ENCODE measurements at regions of chr10 and their contacts with region 1.

Region 1: GRCh38 chr10:102420810-102421644 is at the start of gene FBXL15:
- H3K4me3 ChIP-seq: peak within 1 kb of the TSS; percentile 80
- H3K27ac ChIP-seq: peak within 1 kb of the TSS; percentile 65
- H3K4me1 ChIP-seq: peaks cover 9% of the 10 kb centered on the region
- CTCF ChIP-seq: no peak

Region 2: GRCh38 chr10:102394079-102394800 is 26.8 kb before region 1 on chr10:
- CTCF ChIA-PET with region 1: interaction called, 57 read pairs
- POLR2A ChIA-PET with region 1: interaction called, 5 read pairs
- H3K4me3 ChIP-seq: peak overlapping the region; percentile 58
- H3K27ac ChIP-seq: no peak overlapping the region; the same call in 1 of the 2 replicates
- H3K4me1 ChIP-seq: peaks cover 5% of the 10 kb centered on the region; the same call in 1 of the 2 replicates
- CTCF ChIP-seq: peak; percentile 94

Region 3: GRCh38 chr10:102399217-102400089 is 21.6 kb before region 1 on chr10:
- CTCF ChIA-PET with region 1: interaction called, 57 read pairs
- POLR2A ChIA-PET with region 1: interaction called, 8 read pairs
- H3K4me3 ChIP-seq: peak overlapping the region; percentile 57
- H3K27ac ChIP-seq: peak overlapping the region; percentile 74; the same call in 1 of the 2 replicates
- H3K4me1 ChIP-seq: peaks cover 5% of the 10 kb centered on the region; the same call in 1 of the 2 replicates
- CTCF ChIP-seq: peak; percentile 100

Region 4: DNA sequence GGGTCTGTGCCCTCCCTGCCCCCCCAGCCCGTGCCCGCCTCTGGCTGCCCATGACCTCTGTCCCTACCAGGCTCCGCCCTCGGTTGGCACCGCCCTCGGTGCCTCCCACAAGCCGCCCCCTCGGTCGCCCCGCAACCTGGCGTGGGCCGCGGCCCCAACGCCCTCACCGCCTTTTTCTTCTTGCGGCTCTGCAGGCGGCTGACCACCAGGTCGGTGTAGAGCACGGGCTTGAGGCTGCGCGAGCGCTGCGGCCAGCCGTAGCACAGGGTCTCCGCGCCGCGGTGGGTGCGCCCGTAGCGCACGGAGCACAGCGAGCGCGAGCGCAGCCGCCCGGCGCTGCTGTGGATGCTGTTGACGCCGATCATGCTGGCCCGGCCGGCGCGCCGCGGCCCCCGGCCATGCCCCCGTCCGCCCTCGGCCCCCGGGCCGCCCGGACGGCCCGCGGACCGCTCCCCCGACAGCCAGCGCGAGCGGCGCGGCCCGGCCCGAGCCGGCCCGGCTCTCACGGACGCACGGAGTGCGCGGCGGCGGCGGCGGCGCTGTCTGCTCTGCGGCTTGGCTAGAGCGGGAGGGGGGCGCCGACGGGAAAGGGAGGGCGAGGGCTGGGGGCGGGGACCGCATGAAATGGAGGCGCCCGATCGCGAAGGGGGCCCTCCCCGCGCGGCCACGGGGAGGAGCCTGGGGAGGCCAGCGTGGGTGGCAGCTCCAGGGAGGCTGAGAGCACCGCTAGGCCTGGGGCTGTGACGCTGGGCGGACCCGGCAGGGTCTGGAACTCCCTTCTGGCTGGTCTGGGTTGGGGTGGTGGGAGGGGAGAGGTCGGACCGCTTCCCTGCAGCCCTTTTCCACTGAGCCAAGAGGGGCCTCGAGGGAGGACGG is 12.1 kb before region 1 on chr10:
- CTCF ChIA-PET with region 1: interaction called, 10 read pairs
- POLR2A ChIA-PET with region 1: interaction called, 8 read pairs
- H3K4me3 ChIP-seq: peak overlapping the region; percentile 28
- H3K27ac ChIP-seq: no peak overlapping the region
- H3K4me1 ChIP-seq: no peaks in the 10 kb centered on the region; the same call in 1 of the 2 replicates
- CTCF ChIP-seq: no peak; the same call in none of the 2 replicates

Region 5: DNA sequence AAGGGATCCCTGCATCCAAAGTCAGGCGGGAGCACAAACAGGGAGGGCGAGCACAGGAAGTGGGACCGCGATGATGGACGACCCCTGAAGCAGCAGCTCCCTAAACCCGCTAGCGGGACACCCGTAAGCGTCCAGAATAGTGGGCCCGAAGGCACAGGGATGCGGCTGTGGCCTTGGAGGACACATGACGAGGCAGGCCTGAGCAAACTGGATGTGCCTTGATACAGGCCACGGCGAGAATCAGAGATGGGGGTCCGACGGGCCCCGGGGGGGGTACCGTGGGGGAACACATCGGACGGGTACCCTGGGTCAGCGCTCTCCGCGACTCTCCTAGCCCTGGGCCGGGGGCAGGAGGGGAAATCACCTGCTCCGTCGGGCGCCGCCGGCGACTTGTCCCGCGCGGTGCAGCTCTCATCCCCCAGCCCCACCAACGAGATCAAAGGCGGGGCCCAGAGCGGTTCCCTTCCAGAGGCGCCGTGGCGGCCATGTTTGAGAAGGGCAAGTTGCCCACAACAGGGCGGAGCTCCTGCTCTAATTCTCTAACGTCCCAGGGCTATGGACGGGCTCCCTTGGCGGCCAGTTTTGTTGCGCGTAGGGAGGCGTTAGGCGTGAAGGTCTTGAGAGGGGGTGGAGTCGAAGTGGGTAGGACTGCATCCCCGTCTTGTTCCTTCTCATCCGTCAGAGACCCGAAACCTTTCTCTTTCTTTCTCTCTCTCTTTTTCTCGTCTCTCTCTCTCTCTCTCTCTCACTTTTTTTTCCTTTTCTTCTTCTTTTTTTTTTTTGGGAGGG is 11.3 kb after region 1 on chr10 and contains the start of gene CUEDC2:
- CTCF ChIA-PET with region 1: interaction called, 14 read pairs
- POLR2A ChIA-PET with region 1: interaction called, 42 read pairs
- H3K4me3 ChIP-seq: peak within 1 kb of the TSS; percentile 62
- H3K27ac ChIP-seq: peak within 1 kb of the TSS; percentile 89
- H3K4me1 ChIP-seq: peaks cover 3% of the 10 kb centered on the region; the same call in 1 of the 2 replicates
- CTCF ChIP-seq: peak; percentile 71

Region 6: DNA sequence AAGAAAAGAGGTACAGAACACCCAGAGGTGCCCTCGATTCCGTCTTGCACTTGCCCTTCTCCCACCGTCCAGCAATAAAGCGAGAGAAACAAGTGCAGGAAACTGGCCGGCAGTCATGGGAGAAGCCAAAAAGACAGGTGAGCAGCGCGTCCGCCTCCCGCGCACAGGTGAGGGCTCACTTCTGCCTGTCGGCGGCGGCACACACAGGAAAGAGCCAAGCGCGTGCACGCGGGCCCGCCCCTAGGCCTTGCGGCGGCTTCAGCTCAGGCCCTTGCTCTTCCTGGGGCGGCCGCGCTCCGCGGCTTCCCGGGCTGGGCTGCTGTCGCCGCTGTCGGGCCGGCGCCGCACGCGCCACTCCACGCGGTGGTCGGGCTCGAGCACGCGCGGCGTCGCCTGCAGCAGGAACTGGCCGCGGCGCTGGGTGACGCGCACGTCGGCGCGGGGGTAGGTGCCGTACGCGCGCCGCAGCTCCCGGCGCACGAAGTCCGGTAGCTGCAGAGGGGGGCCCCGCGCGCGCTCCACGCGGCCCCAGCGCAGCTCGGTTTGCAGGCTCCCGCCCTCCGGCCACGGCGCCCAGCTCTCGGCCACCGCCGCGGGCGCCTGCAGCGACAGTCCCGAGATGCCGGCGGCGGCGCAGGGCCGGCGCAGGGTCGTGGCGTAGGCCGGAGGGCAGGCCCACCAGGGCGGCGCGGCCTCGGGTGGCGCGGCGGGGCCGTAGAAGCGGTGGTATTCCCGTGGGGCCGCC is 29.3 kb after region 1 on chr10:
- CTCF ChIA-PET with region 1: interaction called, 5 read pairs
- POLR2A ChIA-PET with region 1: interaction called, 22 read pairs
- H3K4me3 ChIP-seq: peak overlapping the region; percentile 73
- H3K27ac ChIP-seq: peak overlapping the region; percentile 97
- H3K4me1 ChIP-seq: peaks cover 5% of the 10 kb centered on the region
- CTCF ChIP-seq: peak; percentile 51; the same call in 1 of the 2 replicates

Region 7: GRCh38 chr10:102540023-102540422 is 119.0 kb after region 1 on chr10:
- CTCF ChIA-PET with region 1: no interaction called
- POLR2A ChIA-PET with region 1: no interaction called
- H3K4me3 ChIP-seq: no peak overlapping the region
- H3K27ac ChIP-seq: no peak overlapping the region
- H3K4me1 ChIP-seq: no peaks in the 10 kb centered on the region
- CTCF ChIP-seq: no peak

Region 8: DNA sequence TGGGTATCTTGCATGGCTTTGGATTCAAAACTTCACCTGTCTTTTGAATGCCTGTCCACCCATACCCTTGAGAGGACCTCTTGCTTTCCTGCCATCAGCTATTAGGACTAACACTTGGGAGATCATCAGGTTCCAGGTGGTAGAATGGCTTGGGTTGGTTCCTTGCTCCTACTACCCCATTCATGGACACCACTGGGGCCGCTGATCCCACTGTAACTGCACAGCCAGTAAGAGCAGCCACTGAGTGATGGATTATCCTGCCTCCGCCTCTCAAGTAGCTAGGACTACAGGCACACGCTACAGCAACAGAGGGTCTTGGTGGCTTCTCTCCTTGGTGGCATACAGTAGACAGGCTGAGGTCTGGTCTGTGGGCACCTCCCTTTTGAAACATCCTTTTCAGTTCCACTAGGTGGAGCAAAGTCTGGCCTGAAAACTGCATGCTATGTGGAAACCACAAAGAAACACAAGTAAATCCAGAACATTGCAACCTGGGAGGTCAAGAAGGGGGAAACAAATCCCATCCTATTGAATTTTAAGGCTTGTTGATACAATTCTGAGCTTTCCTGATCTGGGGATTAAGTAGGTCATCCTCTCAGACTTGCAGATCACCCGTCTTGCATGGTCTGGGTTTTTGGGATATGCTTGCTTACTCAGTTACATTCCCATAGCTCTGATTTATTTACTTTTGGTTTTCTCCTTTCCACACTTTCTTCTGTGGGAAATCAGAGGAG is 332.1 kb after region 1 on chr10:
- CTCF ChIA-PET with region 1: no interaction called
- POLR2A ChIA-PET with region 1: no interaction called
- H3K4me3 ChIP-seq: no peak overlapping the region
- H3K27ac ChIP-seq: no peak overlapping the region
- H3K4me1 ChIP-seq: no peaks in the 10 kb centered on the region
- CTCF ChIP-seq: peak; percentile 45; the same call in 1 of the 2 replicates

Measured in HEK293 (cell line).